Pancreas (tissue), 10 donors: ENCODE measurements at regions of chrX and their contacts with region 1.

Region 1: GRCh38 chrX:74382613-74383012 is 38.7 kb upstream of the SLC16A2 start:
- DNase-seq: peak; percentile 16 to 75 (median 52)
- ATAC-seq: peak; percentile 82 to 98 (median 92)
- H3K4me3 ChIP-seq: no peak overlapping the region
- H3K27ac ChIP-seq: no peak overlapping the region
- H3K4me1 ChIP-seq: no peaks in the 10 kb centered on the region
- H3K27me3 ChIP-seq: peaks cover 0 to 22% (median 0%) of the 10 kb centered on the region in 4 donors
- CTCF ChIP-seq: peak; percentile 68 to 79 (median 74)

Region 2: DNA sequence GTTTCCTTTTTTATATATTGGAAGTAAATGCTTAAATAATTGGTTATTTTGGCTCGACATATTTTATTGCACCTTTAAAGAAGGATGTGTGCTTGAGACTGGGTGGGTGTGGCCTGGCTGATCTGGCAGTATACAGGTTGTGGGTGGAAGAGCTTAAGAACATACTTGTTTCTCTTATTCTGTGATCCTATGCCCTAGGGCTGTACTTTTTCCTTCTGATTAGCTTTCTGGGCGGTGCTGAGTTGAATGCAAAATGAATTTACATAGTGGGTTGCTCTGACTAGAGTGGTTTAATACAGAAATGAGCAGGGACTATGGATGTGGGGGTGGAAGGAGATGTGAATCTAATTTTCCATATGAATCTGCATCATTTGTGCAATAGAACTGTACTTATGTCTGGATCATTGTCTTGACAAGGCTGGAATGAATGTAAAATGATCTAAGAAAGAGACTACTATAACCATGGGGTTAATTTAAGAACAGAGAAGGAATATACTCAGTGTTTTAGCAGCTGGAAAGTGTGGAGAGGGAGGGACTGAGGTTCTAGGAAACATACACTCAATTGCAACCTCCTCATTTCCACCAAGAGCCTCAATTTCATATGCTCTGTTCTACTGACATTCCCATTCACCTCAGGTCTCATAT is 158.1 kb after region 1 on chrX:
- intact Hi-C with region 1: loop called in 1 of 3 experiments (anchors 10 kb)
- DNase-seq: no peak
- ATAC-seq: no peak
- H3K4me3 ChIP-seq: no peak overlapping the region
- H3K27ac ChIP-seq: no peak overlapping the region
- H3K4me1 ChIP-seq: no peaks in the 10 kb centered on the region
- H3K27me3 ChIP-seq: peaks cover 0 to 3% (median 0%) of the 10 kb centered on the region in 4 donors
- CTCF ChIP-seq: no peak